Dorsolateral prefrontal cortex (tissue), 120 donors: ENCODE measurements at regions of chr11 and their contacts with region 1.

Region 1: DNA sequence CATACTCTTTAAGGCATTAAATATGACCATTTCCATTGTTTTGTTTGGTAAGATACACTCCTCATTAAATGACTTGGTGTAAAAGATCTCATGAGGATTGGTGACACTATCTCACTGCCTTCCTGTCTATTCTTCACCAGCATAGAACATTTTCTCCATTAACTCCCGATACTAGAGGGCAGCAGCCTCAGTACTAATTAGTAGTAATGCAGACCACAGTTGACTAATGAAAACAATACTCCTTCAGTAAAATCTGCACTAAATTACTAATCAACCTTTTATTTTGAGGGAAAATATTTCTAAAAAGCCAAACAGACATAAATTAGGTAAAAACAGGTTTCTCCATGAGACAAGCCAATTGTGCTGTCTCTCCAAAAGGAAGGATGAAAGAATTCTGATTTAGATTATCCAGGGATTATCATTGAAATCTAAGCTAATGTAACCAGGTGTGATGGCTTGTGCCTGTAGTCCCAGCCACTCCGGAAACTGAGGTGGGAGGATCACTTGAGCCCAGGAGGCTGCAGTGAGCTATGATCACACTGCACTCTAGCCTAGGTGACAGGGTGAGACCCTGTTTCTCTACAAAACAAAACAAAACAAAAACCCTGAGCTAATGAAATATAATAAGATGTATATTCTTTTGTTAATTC is 9.4 kb downstream of the PGM2L1 start:
- DNase-seq: peak in 3 of 10 donors; percentile 51 to 73 (median 66)
- H3K4me3 ChIP-seq: no peak overlapping the region
- H3K27ac ChIP-seq: no peak overlapping the region
- H3K27me3 ChIP-seq: no peaks in the 10 kb centered on the region
- CTCF ChIP-seq: peak; percentile 30 to 92 (median 78)

Region 2: GRCh38 chr11:74373382-74373781 is 15.4 kb before region 1 on chr11:
- intact Hi-C with region 1: no loop called
- DNase-seq: no peak
- H3K4me3 ChIP-seq: no peak overlapping the region
- H3K27ac ChIP-seq: no peak overlapping the region
- H3K27me3 ChIP-seq: no peaks in the 10 kb centered on the region
- CTCF ChIP-seq: no peak

Region 3: GRCh38 chr11:74546724-74547123 is 157.9 kb after region 1 on chr11:
- intact Hi-C with region 1: no loop called
- DNase-seq: no peak
- H3K4me3 ChIP-seq: no peak overlapping the region
- H3K27ac ChIP-seq: no peak overlapping the region
- H3K27me3 ChIP-seq: no peaks in the 10 kb centered on the region
- CTCF ChIP-seq: no peak

Region 4: GRCh38 chr11:74683279-74683871 is 294.6 kb after region 1 on chr11:
- intact Hi-C with region 1: loop called in 1 of 2 experiments (anchors 5 kb)
- DNase-seq: peak; percentile 53 to 91 (median 81)
- H3K4me3 ChIP-seq: peak overlapping the region; percentile 18 to 70 (median 53)
- H3K27ac ChIP-seq: peak overlapping the region in 58 of 59 donors; percentile 26 to 94 (median 83)
- H3K27me3 ChIP-seq: no peaks in the 10 kb centered on the region
- CTCF ChIP-seq: peak; percentile 25 to 83 (median 68)